ENCODE measurements at regions of chr4 and their contacts with region 1.

Region 1: GRCh38 chr4:39846120-39846519 is 131.6 kb downstream of the PDS5A start:
- DNase-seq: no peak
- ATAC-seq: no peak
- H3K4me3 Mint-ChIP-seq: no peak overlapping the region
- H3K27ac Mint-ChIP-seq: no peak overlapping the region
- H3K4me1 Mint-ChIP-seq: no peaks in the 10 kb centered on the region
- H3K27me3 Mint-ChIP-seq: no peaks in the 10 kb centered on the region

Region 2: GRCh38 chr4:39565878-39566600 is 280.1 kb before region 1 on chr4:
- CTCF ChIA-PET with region 1: no interaction called
- POLR2A ChIA-PET with region 1: interaction called, 11 read pairs
- intact Hi-C with region 1: no loop called
- DNase-seq: no peak
- ATAC-seq: no peak
- H3K4me3 Mint-ChIP-seq: no peak overlapping the region
- H3K27ac Mint-ChIP-seq: no peak overlapping the region
- H3K4me1 Mint-ChIP-seq: peaks cover 5% of the 10 kb centered on the region
- H3K27me3 Mint-ChIP-seq: no peaks in the 10 kb centered on the region

Region 3: DNA sequence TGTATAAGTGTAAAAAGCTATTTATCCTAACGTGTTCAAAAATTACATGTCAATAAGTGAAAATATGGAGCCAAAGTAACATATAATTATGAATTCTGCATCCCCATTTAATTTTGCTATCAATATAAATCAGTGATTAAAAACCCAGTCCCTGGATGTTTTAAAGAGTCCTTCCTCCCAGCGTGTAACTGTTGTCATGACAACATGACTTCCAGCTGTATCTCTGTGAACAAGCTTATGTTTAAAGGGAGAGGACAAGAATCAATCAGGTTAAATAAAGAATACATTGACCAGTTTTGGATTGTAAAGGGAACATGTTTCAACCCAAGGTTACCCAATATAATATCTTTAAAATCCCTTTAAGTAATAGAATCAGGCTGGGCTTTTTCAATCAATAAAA is 1123.4 kb after region 1 on chr4:
- CTCF ChIA-PET with region 1: no interaction called
- POLR2A ChIA-PET with region 1: no interaction called
- intact Hi-C with region 1: no loop called
- DNase-seq: no peak
- ATAC-seq: no peak
- H3K4me3 Mint-ChIP-seq: no peak overlapping the region
- H3K27ac Mint-ChIP-seq: no peak overlapping the region
- H3K4me1 Mint-ChIP-seq: no peaks in the 10 kb centered on the region
- H3K27me3 Mint-ChIP-seq: peaks cover 10% of the 10 kb centered on the region

Measured in activated CD4-positive, alpha-beta T cell treated with anti-CD3 and anti-CD28 coated beads for 36 hours (primary cell).